CD8-positive, alpha-beta T cell (primary cell): ENCODE measurements at regions of chrX and their contacts with region 1.

Region 1: DNA sequence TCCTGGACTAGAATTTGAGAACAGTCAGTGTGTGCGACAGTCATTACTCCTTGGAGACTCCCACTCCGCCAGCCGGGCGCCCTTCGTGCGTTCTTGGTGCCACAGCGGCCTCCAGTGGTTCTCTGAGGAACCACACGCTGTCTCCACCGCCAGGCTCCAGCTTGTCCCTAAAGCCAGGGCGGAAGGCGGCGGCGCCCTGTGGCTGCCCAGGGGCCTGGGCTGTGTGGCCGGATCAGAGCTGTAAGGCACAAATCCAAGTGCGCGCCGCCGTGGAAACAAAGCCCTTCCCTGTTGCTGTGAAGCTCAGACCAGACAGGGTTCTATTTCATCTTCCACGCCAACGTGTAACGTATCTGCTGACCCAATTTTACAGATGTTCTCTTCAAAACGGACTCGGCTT is 34.2 kb downstream of the IDS start:
- DNase-seq: peak in 8 of 9 experiments; percentile 30 to 71 (median 62)
- ATAC-seq: peak; percentile 80
- H3K4me3 ChIP-seq: no peak overlapping the region
- H3K4me3 Mint-ChIP-seq: no peak overlapping the region
- H3K27ac ChIP-seq: no peak overlapping the region
- H3K27ac Mint-ChIP-seq: no peak overlapping the region
- H3K4me1 ChIP-seq: no peaks in the 10 kb centered on the region
- H3K4me1 Mint-ChIP-seq: peaks cover 3% of the 10 kb centered on the region
- H3K27me3 ChIP-seq: no peaks in the 10 kb centered on the region
- H3K27me3 Mint-ChIP-seq: peaks cover under 1% of the 10 kb centered on the region
- CTCF ChIP-seq: peak; percentile 73

Region 2: GRCh38 chrX:148049441-148049840 is 1421.5 kb before region 1 on chrX:
- CTCF ChIA-PET with region 1: interaction called, 14 read pairs
- POLR2A ChIA-PET with region 1: no interaction called
- intact Hi-C with region 1: loop called (anchors 1 kb)
- DNase-seq: peak in 2 of 9 experiments; percentile 40 to 54
- ATAC-seq: no peak
- H3K4me3 ChIP-seq: no peak overlapping the region
- H3K4me3 Mint-ChIP-seq: no peak overlapping the region
- H3K27ac ChIP-seq: no peak overlapping the region
- H3K27ac Mint-ChIP-seq: no peak overlapping the region
- H3K4me1 ChIP-seq: no peaks in the 10 kb centered on the region
- H3K4me1 Mint-ChIP-seq: no peaks in the 10 kb centered on the region
- H3K27me3 ChIP-seq: no peaks in the 10 kb centered on the region
- H3K27me3 Mint-ChIP-seq: no peaks in the 10 kb centered on the region
- CTCF ChIP-seq: peak; percentile 41

Region 3: GRCh38 chrX:148893395-148893794 is 577.6 kb before region 1 on chrX:
- CTCF ChIA-PET with region 1: no interaction called
- POLR2A ChIA-PET with region 1: no interaction called
- intact Hi-C with region 1: no loop called
- DNase-seq: no peak
- ATAC-seq: no peak
- H3K4me3 ChIP-seq: no peak overlapping the region
- H3K4me3 Mint-ChIP-seq: no peak overlapping the region
- H3K27ac ChIP-seq: no peak overlapping the region
- H3K27ac Mint-ChIP-seq: no peak overlapping the region
- H3K4me1 ChIP-seq: no peaks in the 10 kb centered on the region
- H3K4me1 Mint-ChIP-seq: no peaks in the 10 kb centered on the region
- H3K27me3 ChIP-seq: no peaks in the 10 kb centered on the region
- H3K27me3 Mint-ChIP-seq: no peaks in the 10 kb centered on the region
- CTCF ChIP-seq: no peak